ENCODE measurements at regions of chr12 and their contacts with region 1.

Region 1: GRCh38 chr12:93569656-93570551 is 2.6 kb upstream of the SOCS2 start:
- DNase-seq: peak; percentile 89
- H3K4me3 ChIP-seq: peak overlapping the region; percentile 75
- H3K27ac ChIP-seq: peak overlapping the region; percentile 39
- H3K4me1 ChIP-seq: peaks cover 3% of the 10 kb centered on the region
- H3K27me3 ChIP-seq: peaks cover 34% of the 10 kb centered on the region
- CTCF ChIP-seq: peak; percentile 80

Region 2: GRCh38 chr12:93484315-93484981 is 85.5 kb before region 1 on chr12:
- CTCF ChIA-PET with region 1: no interaction called
- POLR2A ChIA-PET with region 1: no interaction called
- intact Hi-C with region 1: no loop called
- DNase-seq: no peak
- H3K4me3 ChIP-seq: no peak overlapping the region
- H3K27ac ChIP-seq: no peak overlapping the region
- H3K4me1 ChIP-seq: no peaks in the 10 kb centered on the region
- H3K27me3 ChIP-seq: no peaks in the 10 kb centered on the region
- CTCF ChIP-seq: no peak

Region 3: GRCh38 chr12:93677195-93678064 is 107.5 kb after region 1 on chr12 and contains the start of gene CRADD:
- CTCF ChIA-PET with region 1: no interaction called
- POLR2A ChIA-PET with region 1: no interaction called
- intact Hi-C with region 1: loop called (anchors 5 kb)
- DNase-seq: peak; percentile 97
- H3K4me3 ChIP-seq: peak within 1 kb of the TSS; percentile 61
- H3K27ac ChIP-seq: peak within 1 kb of the TSS; percentile 96
- H3K4me1 ChIP-seq: peaks cover 3% of the 10 kb centered on the region
- H3K27me3 ChIP-seq: no peaks in the 10 kb centered on the region
- CTCF ChIP-seq: no peak
- total RNA-seq, gene CRADD: 9.1 and 9.4 TPM in 2 replicates

Region 4: DNA sequence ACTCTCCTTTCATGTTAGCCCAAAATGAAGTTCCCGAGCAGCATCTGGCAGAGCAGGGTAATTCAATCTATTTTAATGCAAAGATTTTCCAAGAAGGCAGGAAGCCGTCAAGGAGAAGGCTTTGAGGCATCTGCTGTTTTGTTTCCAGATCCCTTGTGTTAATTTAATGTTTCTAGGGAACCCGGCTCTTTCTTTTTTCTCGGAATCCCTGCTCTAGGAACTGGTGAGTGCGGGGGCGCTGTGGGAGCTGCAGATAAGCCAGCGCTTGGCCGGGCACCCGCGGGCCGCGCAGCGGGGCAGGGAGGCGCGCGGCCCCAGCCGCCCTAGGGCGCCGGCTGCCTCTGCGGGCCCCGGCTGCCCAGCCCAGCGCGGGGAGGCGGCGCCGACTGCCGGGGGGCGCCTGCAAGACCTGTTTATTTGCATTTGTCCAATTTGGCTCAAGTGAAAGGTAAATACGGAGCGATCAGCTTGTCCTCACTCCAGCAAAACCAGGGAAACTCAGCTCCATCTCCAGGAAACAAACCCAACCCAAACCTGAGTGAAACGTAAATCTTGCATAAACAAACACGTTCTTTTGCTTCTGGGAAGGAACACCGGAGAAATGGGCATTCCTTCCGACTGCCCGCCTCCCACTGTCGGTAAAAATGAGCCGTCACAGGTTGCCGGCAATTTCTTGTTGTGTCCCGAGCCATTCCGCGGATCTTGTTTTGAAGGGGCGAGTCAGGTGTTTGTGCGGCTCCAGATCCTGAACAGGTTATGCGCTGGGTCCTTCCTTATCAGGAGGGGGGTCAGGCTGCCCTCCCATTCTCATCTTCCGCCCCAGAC is 172.4 kb after region 1 on chr12:
- CTCF ChIA-PET with region 1: interaction called, 3 read pairs
- POLR2A ChIA-PET with region 1: no interaction called
- intact Hi-C with region 1: loop called (anchors 2 kb)
- DNase-seq: peak; percentile 77
- H3K4me3 ChIP-seq: peak overlapping the region; percentile 59
- H3K27ac ChIP-seq: no peak overlapping the region
- H3K4me1 ChIP-seq: peaks cover 10% of the 10 kb centered on the region
- H3K27me3 ChIP-seq: no peaks in the 10 kb centered on the region
- CTCF ChIP-seq: peak; percentile 47

Region 5: GRCh38 chr12:93766796-93767523 is 197.1 kb after region 1 on chr12:
- CTCF ChIA-PET with region 1: interaction called, 3 read pairs
- POLR2A ChIA-PET with region 1: no interaction called
- intact Hi-C with region 1: loop called (anchors 2 kb)
- DNase-seq: peak; percentile 74
- H3K4me3 ChIP-seq: no peak overlapping the region
- H3K27ac ChIP-seq: no peak overlapping the region
- H3K4me1 ChIP-seq: peaks cover 16% of the 10 kb centered on the region
- H3K27me3 ChIP-seq: no peaks in the 10 kb centered on the region
- CTCF ChIP-seq: peak; percentile 77

Measured in A673 (cell line).